GM12878 (cell line): ENCODE measurements at regions of chr16 and their contacts with region 1.

Region 1: DNA sequence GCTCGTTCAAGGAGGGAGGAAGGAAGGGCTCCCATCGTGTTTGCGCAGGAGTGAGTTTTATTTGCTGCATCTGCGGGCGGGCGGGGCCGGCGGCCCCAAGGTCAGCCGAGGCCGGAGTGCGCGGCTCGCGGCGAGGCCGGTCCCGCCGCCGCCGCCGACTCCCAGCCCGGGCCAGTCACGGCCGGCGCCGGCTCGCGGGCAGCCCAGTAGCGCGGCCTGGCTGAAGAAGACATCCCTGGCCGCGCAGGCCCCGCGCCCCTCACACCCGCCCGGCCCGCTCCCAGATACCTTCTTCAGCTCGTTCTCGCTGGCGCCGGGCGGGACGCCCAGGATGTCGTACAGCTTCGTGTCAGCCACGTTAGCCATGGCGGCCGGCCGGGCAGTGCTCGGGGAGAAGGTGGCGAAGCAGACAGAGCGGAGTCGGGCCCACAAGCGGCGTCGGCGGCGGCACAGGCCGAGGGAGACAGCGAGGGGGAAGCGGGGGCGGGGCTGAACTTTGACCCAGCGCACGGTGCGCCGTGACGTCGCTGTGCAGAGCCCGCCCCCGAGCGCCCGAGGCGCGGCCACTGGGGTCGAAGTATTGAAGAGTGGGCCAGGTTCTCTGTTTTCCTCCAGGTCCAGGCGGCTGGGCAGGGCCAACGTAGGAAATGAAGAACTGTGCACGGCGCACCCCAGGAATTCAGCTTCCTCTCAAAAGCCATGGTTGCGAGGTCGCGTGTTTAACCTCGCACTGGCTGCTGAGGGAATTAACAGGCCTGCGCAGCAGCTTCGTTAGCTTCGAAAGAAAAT is at the start of gene DNAJA2:
- DNase-seq: peak; percentile 54
- ATAC-seq: peak; percentile 90
- H3K4me3 ChIP-seq: peak within 1 kb of the TSS; percentile 88
- H3K27ac ChIP-seq: peak within 1 kb of the TSS; percentile 98
- H3K4me1 ChIP-seq: peaks cover 23% of the 10 kb centered on the region
- H3K27me3 ChIP-seq: no peaks in the 10 kb centered on the region
- CTCF ChIP-seq: no peak
- EP300 ChIP-seq: no peak
- POLR2A ChIP-seq: peak; percentile 91
- RAD21 ChIP-seq: no peak
- polyA plus RNA-seq, gene DNAJA2: 40.4 to 43.5 TPM

Region 2: GRCh38 chr16:46961373-46962353 is 11.7 kb before region 1 on chr16:
- CTCF ChIA-PET with region 1: interaction called, 7 read pairs
- POLR2A ChIA-PET with region 1: interaction called, 7 read pairs
- RAD21 ChIA-PET with region 1: no interaction called
- SMC1A ChIA-PET with region 1: interaction called, 19 read pairs
- in situ Hi-C with region 1: no loop called
- intact Hi-C with region 1: loop called (anchors 1 kb)
- DNase-seq: no peak
- ATAC-seq: peak; percentile 89
- H3K4me3 ChIP-seq: 0 out of 2 replicates have a peak overlapping the region, but pooled peaks have one; percentile 8
- H3K27ac ChIP-seq: no peak overlapping the region
- H3K4me1 ChIP-seq: peaks cover 13% of the 10 kb centered on the region
- H3K27me3 ChIP-seq: no peaks in the 10 kb centered on the region
- CTCF ChIP-seq: no peak
- EP300 ChIP-seq: no peak
- POLR2A ChIP-seq: no peak
- RAD21 ChIP-seq: no peak

Region 3: GRCh38 chr16:47018223-47018891 is 45.0 kb after region 1 on chr16:
- CTCF ChIA-PET with region 1: interaction called, 17 read pairs
- POLR2A ChIA-PET with region 1: interaction called, 4 read pairs
- RAD21 ChIA-PET with region 1: interaction called, 29 read pairs
- SMC1A ChIA-PET with region 1: interaction called, 31 read pairs
- in situ Hi-C with region 1: no loop called
- intact Hi-C with region 1: loop called (anchors 1 kb)
- DNase-seq: peak; percentile 98
- ATAC-seq: peak; percentile 97
- H3K4me3 ChIP-seq: no peak overlapping the region
- H3K27ac ChIP-seq: peak overlapping the region; percentile 38; the same call in 1 of the 2 replicates
- H3K4me1 ChIP-seq: peaks cover 31% of the 10 kb centered on the region
- H3K27me3 ChIP-seq: no peaks in the 10 kb centered on the region
- CTCF ChIP-seq: peak; percentile 72 to 86 (median 73)
- EP300 ChIP-seq: peak; percentile 54 to 55; a peak in 3 of 4 replicates
- POLR2A ChIP-seq: no peak
- RAD21 ChIP-seq: peak; percentile 80

Region 4: DNA sequence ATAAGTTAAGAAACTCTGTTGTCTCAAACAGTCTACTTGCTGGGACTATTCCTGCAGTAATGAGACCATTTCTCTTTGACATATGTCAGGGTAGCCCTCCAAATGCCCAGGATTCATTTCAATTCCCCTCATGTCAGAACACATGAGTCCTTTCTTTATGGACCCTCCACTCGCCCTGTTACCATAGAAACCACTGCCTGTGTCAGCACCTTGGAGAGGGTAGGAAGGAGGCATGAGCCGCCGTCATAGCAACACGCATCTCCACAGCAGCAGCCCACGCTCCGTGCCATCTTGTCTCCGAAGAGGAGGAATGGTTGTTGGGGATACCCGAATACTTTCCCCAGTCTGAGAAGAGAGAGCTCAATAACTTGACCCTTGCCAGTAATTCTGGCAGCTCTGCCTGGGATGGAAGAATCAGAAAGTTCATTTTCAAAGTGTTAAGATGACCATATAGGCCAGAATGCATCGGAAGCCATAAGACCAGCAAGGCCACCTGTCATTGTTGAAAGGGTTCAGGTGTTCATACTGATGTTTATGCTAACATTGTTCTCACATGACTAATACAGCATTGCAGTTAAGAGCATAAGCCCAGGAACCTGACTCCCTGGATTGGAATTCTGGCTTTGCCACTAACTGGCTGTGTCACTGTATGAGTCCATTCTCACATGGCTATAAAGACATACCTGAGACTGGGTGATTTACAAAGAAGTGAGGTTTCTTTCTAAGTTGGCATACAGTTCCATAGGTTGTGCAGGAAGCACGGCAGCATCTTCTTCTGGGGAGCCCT is 1041.1 kb after region 1 on chr16:
- CTCF ChIA-PET with region 1: no interaction called
- POLR2A ChIA-PET with region 1: no interaction called
- RAD21 ChIA-PET with region 1: no interaction called
- SMC1A ChIA-PET with region 1: no interaction called
- in situ Hi-C with region 1: no loop called
- intact Hi-C with region 1: no loop called
- DNase-seq: no peak
- ATAC-seq: no peak
- H3K4me3 ChIP-seq: no peak overlapping the region
- H3K27ac ChIP-seq: no peak overlapping the region
- H3K4me1 ChIP-seq: no peaks in the 10 kb centered on the region
- H3K27me3 ChIP-seq: no peaks in the 10 kb centered on the region
- CTCF ChIP-seq: no peak
- EP300 ChIP-seq: no peak
- POLR2A ChIP-seq: no peak
- RAD21 ChIP-seq: no peak